ENCODE measurements at regions of chr14 and their contacts with region 1.

Region 1: GRCh38 chr14:73728717-73729330 is 14.6 kb upstream of the PNMA1 start:
- DNase-seq: peak; percentile 89
- ATAC-seq: peak; percentile 60 to 62

Region 2: DNA sequence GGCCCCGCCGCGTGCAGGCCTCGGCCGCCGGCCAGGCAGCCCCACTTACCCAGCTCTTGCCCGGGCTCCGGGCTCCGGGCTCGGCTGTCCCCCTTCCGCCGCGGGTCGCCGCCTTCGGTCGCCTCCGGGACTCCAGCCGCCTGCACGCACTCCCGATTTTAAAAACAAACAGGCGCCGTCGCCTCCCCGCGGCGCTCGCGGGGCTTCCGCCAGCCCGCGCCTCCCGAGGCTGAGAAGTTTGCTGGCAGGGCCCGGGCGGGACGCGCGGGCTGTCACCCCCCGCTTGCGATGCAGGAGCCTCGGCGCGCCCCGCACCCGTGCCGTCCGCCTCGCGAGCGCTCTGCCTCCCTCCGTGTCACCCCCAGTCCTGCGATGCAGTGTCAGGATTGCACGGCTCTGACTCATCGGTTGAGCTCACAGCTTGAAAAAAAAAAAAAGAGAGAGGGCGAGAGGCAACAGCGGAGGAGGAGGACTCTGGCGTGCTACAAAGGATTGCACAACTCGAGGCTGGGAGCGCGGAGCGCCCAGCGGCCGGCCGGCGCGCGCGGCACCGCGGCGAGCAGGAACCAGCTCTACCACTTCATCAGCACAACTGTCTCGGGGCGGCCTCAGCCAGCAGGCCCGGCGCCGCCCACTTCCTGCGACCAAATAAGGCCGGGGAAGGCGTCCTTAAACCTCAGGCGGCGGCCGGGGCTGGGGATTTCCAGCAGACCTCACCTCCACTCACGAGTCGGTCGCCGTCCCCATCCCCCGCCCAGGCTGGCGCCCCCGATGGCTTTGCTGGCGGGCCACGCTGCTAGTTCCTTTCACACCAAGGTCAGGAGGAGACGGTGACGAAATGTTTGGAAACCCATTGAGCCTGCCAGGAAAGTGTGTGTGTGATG is 31.1 kb after region 1 on chr14:
- intact Hi-C with region 1: loop called in 1 of 2 experiments (anchors 2 kb)
- DNase-seq: peak; percentile 98
- ATAC-seq: peak; percentile 82 to 86

Region 3: DNA sequence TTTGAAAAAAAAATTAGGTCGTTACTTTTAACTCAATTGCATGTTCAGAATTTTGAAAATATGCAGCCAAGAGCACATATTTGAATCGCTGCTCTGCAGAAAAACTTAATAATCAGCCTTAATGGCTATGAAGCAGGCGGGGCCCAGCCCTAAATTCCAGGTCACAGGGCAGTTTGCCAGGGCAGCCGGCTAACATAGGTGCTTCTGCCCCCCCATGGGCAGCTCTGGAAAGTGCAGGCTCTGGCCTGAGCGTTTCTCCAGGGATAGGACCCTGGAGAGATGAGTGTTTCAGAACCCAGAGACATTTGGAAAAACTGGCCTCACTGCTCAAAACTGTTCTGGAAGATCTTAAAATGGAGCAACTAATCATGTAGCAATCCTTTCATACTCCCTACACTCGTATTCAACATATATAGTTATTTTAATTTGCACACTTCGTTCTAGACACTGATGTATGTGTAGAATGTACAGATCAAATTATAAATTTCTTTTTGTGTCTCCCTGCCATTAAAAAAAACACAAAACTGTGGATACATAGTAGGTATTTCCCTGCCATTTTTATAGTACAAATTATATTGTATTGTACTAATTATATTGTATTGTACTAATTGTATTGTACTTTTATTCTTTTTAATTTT is 96.8 kb after region 1 on chr14:
- intact Hi-C with region 1: loop called (anchors 1 to 5 kb)
- DNase-seq: peak; percentile 95
- ATAC-seq: peak; percentile 95 to 97

Measured in left cardiac atrium (tissue), 4 donors.